Common myeloid progenitor, CD34-positive (primary cell): ENCODE measurements at regions of chr11 and their contacts with region 1.

Region 1: DNA sequence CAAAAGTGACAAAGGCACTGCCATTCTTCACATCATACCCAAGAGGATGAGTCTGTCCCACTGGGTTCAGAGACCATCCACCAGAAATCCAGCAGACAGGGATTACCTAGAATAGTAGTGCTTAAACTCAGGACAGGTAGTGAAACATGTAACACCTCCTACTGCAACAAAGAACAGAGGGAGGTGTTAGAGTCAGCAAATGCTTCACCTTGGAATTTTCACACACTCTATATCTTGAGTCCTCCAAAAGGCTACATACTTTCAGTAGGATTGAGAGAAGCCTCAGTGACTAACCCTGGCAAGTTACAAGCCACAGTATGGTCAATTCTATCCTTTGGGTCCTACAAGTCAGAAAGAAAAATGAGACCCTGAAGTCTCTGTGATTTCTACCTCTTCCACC is 6.0 kb upstream of the CAVIN3 start:
- DNase-seq: no peak
- H3K4me3 ChIP-seq: no peak overlapping the region
- H3K27ac ChIP-seq: no peak overlapping the region
- H3K4me1 ChIP-seq: peaks cover 0 to under 1% (median 0%) of the 10 kb centered on the region in 4 experiments
- H3K27me3 ChIP-seq: peaks cover 4 to 21% (median 11%) of the 10 kb centered on the region in 5 experiments

Region 2: DNA sequence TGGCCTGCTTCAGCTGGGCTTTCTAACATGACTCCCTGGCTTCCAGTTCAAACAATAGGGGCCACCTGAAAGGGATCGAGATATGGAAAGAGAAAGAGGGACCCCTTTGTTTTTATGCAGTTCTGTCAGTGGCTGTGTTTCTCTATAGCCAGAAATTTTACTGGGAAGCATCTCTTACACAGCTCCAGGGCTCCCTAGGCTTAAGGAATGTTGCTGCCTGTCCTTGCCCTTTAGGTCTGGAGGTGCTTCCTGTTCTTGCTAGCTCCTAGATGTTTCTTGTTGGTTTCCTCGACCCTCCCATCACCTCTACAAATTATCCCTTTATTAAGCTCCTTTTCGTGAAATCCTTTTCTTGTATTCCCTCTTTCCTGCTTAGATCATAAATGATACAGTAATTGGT is 273.9 kb before region 1 on chr11:
- CTCF ChIA-PET with region 1: no interaction called
- POLR2A ChIA-PET with region 1: no interaction called
- DNase-seq: no peak
- H3K4me3 ChIP-seq: no peak overlapping the region
- H3K27ac ChIP-seq: no peak overlapping the region
- H3K4me1 ChIP-seq: no peaks in the 10 kb centered on the region
- H3K27me3 ChIP-seq: peaks cover 0 to 6% (median 3%) of the 10 kb centered on the region in 5 experiments

Region 3: DNA sequence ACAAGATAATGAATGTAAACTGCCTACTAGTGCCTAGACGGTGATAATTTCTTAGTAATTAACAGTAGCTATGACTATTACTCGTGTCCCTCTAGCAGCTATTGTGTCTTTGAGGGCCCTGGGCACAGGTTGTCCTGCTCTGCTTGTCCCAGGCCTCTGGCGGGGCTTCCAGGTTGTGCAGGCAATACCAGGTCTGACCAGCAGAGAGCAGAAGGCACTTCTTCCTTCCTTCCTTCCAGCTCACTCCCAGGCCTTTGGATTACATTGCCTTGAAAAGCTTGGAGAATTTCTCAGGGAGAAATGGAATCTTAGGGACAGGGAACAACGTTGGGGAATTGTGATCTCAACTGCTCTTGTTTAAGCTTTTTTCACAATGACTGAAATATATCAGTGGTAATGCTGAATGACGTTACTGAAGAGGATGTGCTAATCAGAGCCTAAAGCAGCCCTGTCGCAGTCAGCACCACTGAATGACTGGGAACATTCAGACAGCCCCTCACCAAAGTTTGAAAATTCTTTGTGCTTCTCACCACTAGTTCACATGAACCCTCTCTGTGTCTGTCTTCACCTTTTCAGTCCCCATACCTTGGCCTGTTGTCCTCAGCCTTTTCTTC is 75.1 kb before region 1 on chr11:
- CTCF ChIA-PET with region 1: no interaction called
- POLR2A ChIA-PET with region 1: no interaction called
- DNase-seq: peak in 2 of 3 donors; percentile 36 to 46
- H3K4me3 ChIP-seq: no peak overlapping the region
- H3K27ac ChIP-seq: no peak overlapping the region
- H3K4me1 ChIP-seq: no peaks in the 10 kb centered on the region
- H3K27me3 ChIP-seq: peaks cover 2 to 17% (median 4%) of the 10 kb centered on the region in 5 experiments

Region 4: GRCh38 chr11:6315811-6316425 is 10.4 kb before region 1 on chr11:
- CTCF ChIA-PET with region 1: interaction called, 10 read pairs
- POLR2A ChIA-PET with region 1: no interaction called
- DNase-seq: peak; percentile 51 to 73 (median 73)
- H3K4me3 ChIP-seq: no peak overlapping the region
- H3K27ac ChIP-seq: no peak overlapping the region
- H3K4me1 ChIP-seq: peaks cover 0 to 20% (median 16%) of the 10 kb centered on the region in 4 experiments
- H3K27me3 ChIP-seq: peaks cover 24 to 45% (median 32%) of the 10 kb centered on the region in 5 experiments

Region 5: GRCh38 chr11:6371825-6372224 is 45.5 kb after region 1 on chr11:
- CTCF ChIA-PET with region 1: no interaction called
- POLR2A ChIA-PET with region 1: no interaction called
- DNase-seq: no peak
- H3K4me3 ChIP-seq: no peak overlapping the region
- H3K27ac ChIP-seq: no peak overlapping the region
- H3K4me1 ChIP-seq: no peaks in the 10 kb centered on the region
- H3K27me3 ChIP-seq: no peaks in the 10 kb centered on the region